WTC11 (cell line): ENCODE measurements at regions of chr15 and their contacts with region 1.

Region 1: GRCh38 chr15:68192804-68193486 is 12.2 kb downstream of the CALML4 start:
- DNase-seq: no peak
- ATAC-seq: no peak
- H3K4me3 Mint-ChIP-seq: no peak overlapping the region
- H3K27ac Mint-ChIP-seq: peak overlapping the region; percentile 84
- H3K4me1 Mint-ChIP-seq: peaks cover 17% of the 10 kb centered on the region
- H3K27me3 Mint-ChIP-seq: no peaks in the 10 kb centered on the region
- CTCF ChIP-seq: no peak

Region 2: GRCh38 chr15:67955252-67955651 is 237.7 kb before region 1 on chr15:
- CTCF ChIA-PET with region 1: no interaction called
- POLR2A ChIA-PET with region 1: no interaction called
- DNase-seq: no peak
- ATAC-seq: no peak
- H3K4me3 Mint-ChIP-seq: no peak overlapping the region
- H3K27ac Mint-ChIP-seq: no peak overlapping the region
- H3K4me1 Mint-ChIP-seq: no peaks in the 10 kb centered on the region
- H3K27me3 Mint-ChIP-seq: no peaks in the 10 kb centered on the region; the same call in none of the 2 replicates
- CTCF ChIP-seq: no peak

Region 3: GRCh38 chr15:67976506-67977073 is 216.4 kb before region 1 on chr15:
- CTCF ChIA-PET with region 1: no interaction called
- POLR2A ChIA-PET with region 1: no interaction called
- DNase-seq: no peak
- ATAC-seq: no peak
- H3K4me3 Mint-ChIP-seq: no peak overlapping the region
- H3K27ac Mint-ChIP-seq: no peak overlapping the region
- H3K4me1 Mint-ChIP-seq: peaks cover 10% of the 10 kb centered on the region
- H3K27me3 Mint-ChIP-seq: no peaks in the 10 kb centered on the region; the same call in 1 of the 2 replicates
- CTCF ChIP-seq: no peak

Region 4: GRCh38 chr15:68204776-68205557 is 12.0 kb after region 1 on chr15 and contains the start of gene CALML4:
- CTCF ChIA-PET with region 1: interaction called, 38 read pairs
- POLR2A ChIA-PET with region 1: interaction called, 4 read pairs
- DNase-seq: no peak
- ATAC-seq: no peak
- H3K4me3 Mint-ChIP-seq: peak within 1 kb of the TSS; percentile 12; the same call in 1 of the 2 replicates
- H3K27ac Mint-ChIP-seq: peak within 1 kb of the TSS; percentile 63
- H3K4me1 Mint-ChIP-seq: peaks cover 46% of the 10 kb centered on the region
- H3K27me3 Mint-ChIP-seq: no peaks in the 10 kb centered on the region
- CTCF ChIP-seq: no peak
- total RNA-seq, gene CALML4: 8.9 to 10.1 TPM (median 9.8 TPM) in 3 replicates

Region 5: DNA sequence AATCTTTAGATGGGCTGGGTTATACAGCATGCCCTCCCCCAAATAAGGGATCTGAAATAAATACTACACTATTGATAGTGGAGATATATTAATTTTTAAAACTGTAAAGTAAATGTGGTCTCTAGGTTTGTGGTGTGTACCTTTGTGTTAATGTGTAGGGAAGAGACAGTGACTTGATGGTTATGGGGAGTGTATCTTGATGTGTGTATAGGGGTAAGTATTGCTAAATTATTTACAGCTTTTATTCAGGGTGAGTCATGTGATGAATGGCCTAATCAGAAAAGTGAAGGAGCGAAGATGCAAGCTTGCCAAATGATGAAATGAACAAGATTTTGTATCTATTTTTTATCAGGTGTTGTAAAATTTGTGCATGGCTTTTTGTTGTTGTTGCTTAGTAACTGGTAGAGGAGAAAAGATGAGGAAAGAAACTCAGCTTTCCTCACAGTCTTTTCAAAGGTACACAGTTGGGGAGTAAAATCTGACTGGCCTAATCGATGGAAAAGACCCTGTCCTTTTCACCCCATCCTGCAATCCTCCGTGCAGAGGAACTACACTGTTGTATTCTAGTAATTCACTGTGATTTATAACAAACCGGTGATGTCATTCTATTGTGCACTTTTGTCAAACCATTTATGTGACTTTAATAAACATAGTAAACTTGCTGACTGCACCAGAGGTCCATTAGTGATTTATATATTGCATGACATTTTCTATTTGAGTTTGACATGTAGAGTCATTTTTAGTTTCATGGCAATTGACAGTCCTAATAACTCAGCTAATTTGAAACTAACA is 102.3 kb after region 1 on chr15:
- CTCF ChIA-PET with region 1: no interaction called
- POLR2A ChIA-PET with region 1: no interaction called
- DNase-seq: no peak
- ATAC-seq: no peak
- H3K4me3 Mint-ChIP-seq: no peak overlapping the region
- H3K27ac Mint-ChIP-seq: no peak overlapping the region
- H3K4me1 Mint-ChIP-seq: peaks cover 26% of the 10 kb centered on the region
- H3K27me3 Mint-ChIP-seq: no peaks in the 10 kb centered on the region
- CTCF ChIP-seq: no peak